Heart right ventricle (tissue), 16 donors: ENCODE measurements at regions of chr17 and their contacts with region 1.

Region 1: GRCh38 chr17:8326511-8327302 is 12.9 kb upstream of the ODF4 start:
- DNase-seq: peak; percentile 47 to 53
- ATAC-seq: peak; percentile 58 to 79 (median 76)
- H3K4me3 ChIP-seq: peak overlapping the region; percentile 37 to 75 (median 64)
- H3K27ac ChIP-seq: peak overlapping the region; percentile 2 to 88 (median 81)
- H3K4me1 ChIP-seq: peaks cover 0 to 35% (median 27%) of the 10 kb centered on the region in 9 donors
- H3K27me3 ChIP-seq: peaks cover 0 to 38% (median 0%) of the 10 kb centered on the region in 7 donors
- CTCF ChIP-seq: no peak

Region 2: DNA sequence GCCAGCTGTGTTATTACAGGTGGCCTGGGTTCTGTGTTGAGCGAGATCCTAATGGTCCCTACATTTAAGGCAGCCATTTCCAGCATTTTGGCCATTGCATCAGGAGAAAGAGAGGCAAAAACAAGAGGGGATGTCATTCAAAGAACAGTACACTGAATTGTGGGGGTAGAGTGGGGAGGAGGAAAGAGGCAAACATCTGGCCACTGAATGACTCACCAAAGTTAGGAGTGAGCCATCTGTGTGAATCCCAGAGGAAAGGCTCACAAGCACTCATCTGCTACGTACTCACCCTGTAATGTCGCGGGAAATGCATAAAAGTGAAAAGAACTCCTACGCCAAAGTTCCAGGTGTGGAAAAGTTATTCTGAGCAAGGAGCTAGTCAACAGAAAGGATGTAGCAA is 33.1 kb after region 1 on chr17:
- intact Hi-C with region 1: loop called in 1 of 10 experiments (anchors 5 kb)
- DNase-seq: peak in 1 of 2 donors; percentile 62
- ATAC-seq: peak; percentile 60 to 93 (median 88)
- H3K4me3 ChIP-seq: peak overlapping the region in 1 of 10 donors; percentile 0
- H3K27ac ChIP-seq: peak overlapping the region in 9 of 10 donors; percentile 67 to 91 (median 75)
- H3K4me1 ChIP-seq: peaks cover 0 to 57% (median 45%) of the 10 kb centered on the region in 9 donors
- H3K27me3 ChIP-seq: no peaks in the 10 kb centered on the region
- CTCF ChIP-seq: no peak

Region 3: DNA sequence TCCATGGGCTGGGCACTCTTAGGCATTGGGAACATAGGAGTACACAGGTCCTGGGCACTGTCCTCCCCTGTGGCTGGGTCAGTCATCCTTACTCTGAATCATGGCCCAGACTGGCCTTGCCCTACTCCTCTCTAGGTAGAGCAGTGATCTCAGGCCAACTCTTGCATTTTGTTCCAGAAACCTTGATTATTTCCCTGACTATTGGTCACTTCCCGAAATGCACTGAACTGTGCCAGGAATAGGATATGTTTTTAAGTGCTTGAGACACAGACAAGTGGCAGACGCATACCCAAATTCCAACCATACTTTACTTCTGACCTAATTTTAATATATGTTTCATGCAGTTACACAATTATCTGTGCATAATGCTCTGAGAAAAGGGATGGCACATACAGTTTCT is 39.5 kb after region 1 on chr17:
- intact Hi-C with region 1: loop called in 4 of 10 experiments (anchors 5 kb)
- DNase-seq: no peak
- ATAC-seq: peak in 7 of 8 donors; percentile 44 to 83 (median 62)
- H3K4me3 ChIP-seq: no peak overlapping the region
- H3K27ac ChIP-seq: peak overlapping the region; percentile 29 to 88 (median 70)
- H3K4me1 ChIP-seq: peaks cover 7 to 66% (median 47%) of the 10 kb centered on the region in 9 donors
- H3K27me3 ChIP-seq: no peaks in the 10 kb centered on the region
- CTCF ChIP-seq: no peak

Region 4: GRCh38 chr17:8376271-8377067 is 49.8 kb after region 1 on chr17 and contains the start of gene KRABD2:
- intact Hi-C with region 1: loop called in 1 of 10 experiments (anchors 5 kb)
- DNase-seq: peak; percentile 92 to 95
- ATAC-seq: peak; percentile 95 to 98 (median 97)
- H3K4me3 ChIP-seq: peak within 1 kb of the TSS; percentile 47 to 89 (median 76)
- H3K27ac ChIP-seq: peak within 1 kb of the TSS; percentile 89 to 97 (median 94)
- H3K4me1 ChIP-seq: peaks cover 4 to 63% (median 46%) of the 10 kb centered on the region in 9 donors
- H3K27me3 ChIP-seq: no peaks in the 10 kb centered on the region
- CTCF ChIP-seq: peak; percentile 11 to 71 (median 62)

Region 5: GRCh38 chr17:8520981-8521380 is 194.3 kb after region 1 on chr17:
- intact Hi-C with region 1: no loop called
- DNase-seq: no peak
- ATAC-seq: no peak
- H3K4me3 ChIP-seq: no peak overlapping the region
- H3K27ac ChIP-seq: no peak overlapping the region
- H3K4me1 ChIP-seq: peaks cover 0 to 7% (median 0%) of the 10 kb centered on the region in 9 donors
- H3K27me3 ChIP-seq: no peaks in the 10 kb centered on the region
- CTCF ChIP-seq: no peak